Activated CD4-positive, alpha-beta memory T cell treated with anti-CD3 and anti-CD28 coated beads, Interleukin-2, amount 10 ng/mL, durations not matched to agents 7 days and 5 days (primary cell): ENCODE measurements at regions of chr12 and their contacts with region 1.

Region 1: DNA sequence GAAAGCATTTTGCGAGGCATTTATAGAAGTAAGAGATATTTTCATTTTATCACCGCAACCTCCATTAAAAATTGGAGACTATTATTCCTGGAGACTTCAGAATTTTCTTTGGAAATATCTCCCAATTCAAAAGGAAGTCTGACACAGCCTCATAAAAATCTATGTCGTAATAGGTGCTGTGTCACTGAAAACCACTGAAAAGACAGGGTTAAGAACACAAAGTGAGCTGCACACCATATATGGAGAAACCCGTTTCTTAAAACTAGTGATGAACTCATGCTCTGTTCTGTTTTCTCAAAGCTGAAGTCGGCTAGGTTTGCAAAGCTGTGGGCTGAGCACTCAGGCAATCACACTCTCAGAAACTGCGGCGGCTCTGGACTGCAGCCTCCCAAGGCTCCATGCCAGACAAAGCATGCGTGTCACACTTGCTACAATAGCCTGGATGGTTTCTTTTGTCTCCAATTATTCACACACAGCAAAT is at the start of gene GLIPR1:
- DNase-seq: peak; percentile 81
- H3K4me3 Mint-ChIP-seq: peak within 1 kb of the TSS; percentile 87
- H3K27ac Mint-ChIP-seq: peak within 1 kb of the TSS; percentile 98
- H3K4me1 Mint-ChIP-seq: peaks cover 71% of the 10 kb centered on the region
- H3K27me3 Mint-ChIP-seq: peaks cover 2% of the 10 kb centered on the region
- total RNA-seq, gene GLIPR1: 52.3 to 54.7 TPM

Region 2: DNA sequence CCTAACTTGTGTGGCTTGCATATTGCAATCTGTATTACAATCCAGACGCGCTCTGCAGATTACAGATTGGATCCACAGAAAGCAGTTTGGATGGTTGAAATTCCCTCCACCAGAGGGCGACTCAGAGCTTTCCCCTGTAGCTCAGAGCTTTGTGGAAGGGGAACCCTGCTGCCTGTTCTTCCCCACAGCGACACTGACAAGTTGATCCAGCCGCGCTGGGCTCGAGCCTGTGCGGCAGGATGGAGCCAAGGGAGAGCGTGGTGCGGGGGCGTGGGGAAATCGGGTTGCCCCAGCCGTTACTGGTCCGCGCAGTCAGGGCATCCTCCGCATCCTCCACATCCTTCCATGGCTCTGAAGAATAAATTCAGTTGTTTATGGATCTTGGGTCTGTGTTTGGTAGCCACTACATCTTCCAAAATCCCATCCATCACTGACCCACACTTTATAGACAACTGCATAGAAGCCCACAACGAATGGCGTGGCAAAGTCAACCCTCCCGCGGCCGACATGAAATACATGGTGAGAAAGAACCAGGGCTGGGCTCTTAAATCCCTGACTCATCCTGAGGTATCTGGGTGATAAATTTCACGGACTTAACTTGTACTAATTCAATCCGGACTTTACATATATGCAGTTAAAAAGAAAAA is 146.0 kb before region 1 on chr12 and contains the start of gene GLIPR1L1:
- CTCF ChIA-PET with region 1: interaction called, 17 read pairs
- POLR2A ChIA-PET with region 1: interaction called, 7 read pairs
- DNase-seq: peak; percentile 83
- H3K4me3 Mint-ChIP-seq: peak within 1 kb of the TSS; percentile 59
- H3K27ac Mint-ChIP-seq: no peak within 1 kb of the TSS
- H3K4me1 Mint-ChIP-seq: peaks cover 33% of the 10 kb centered on the region
- H3K27me3 Mint-ChIP-seq: peaks cover 31% of the 10 kb centered on the region
- total RNA-seq, gene GLIPR1L1: not detected

Region 3: DNA sequence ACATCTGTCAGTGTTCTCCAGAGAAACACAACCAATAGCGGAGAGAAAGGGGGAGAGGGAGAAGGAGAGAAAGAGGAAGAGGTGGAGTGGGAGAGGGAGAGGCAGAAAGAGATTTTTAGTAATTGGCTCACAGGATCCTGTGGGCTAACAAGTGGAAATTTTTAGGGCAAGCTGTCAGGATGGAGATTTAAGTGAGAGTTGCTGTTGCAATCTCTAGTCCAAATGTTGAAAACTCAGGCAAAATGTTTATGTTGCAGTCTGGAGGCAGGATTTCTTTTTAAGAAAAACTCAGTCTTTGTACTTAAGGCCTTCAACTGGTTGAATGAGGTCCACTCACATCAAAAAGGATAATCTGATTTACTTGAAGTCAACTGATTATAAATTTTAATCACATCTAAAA is 102.2 kb before region 1 on chr12:
- CTCF ChIA-PET with region 1: no interaction called
- POLR2A ChIA-PET with region 1: no interaction called
- DNase-seq: no peak
- H3K4me3 Mint-ChIP-seq: no peak overlapping the region
- H3K27ac Mint-ChIP-seq: no peak overlapping the region
- H3K4me1 Mint-ChIP-seq: no peaks in the 10 kb centered on the region
- H3K27me3 Mint-ChIP-seq: no peaks in the 10 kb centered on the region

Region 4: GRCh38 chr12:75427491-75427890 is 53.0 kb before region 1 on chr12:
- CTCF ChIA-PET with region 1: no interaction called
- POLR2A ChIA-PET with region 1: no interaction called
- DNase-seq: no peak
- H3K4me3 Mint-ChIP-seq: no peak overlapping the region
- H3K27ac Mint-ChIP-seq: no peak overlapping the region
- H3K4me1 Mint-ChIP-seq: no peaks in the 10 kb centered on the region
- H3K27me3 Mint-ChIP-seq: no peaks in the 10 kb centered on the region

Region 5: GRCh38 chr12:75437564-75437963 is 42.9 kb before region 1 on chr12:
- CTCF ChIA-PET with region 1: interaction called, 22 read pairs
- POLR2A ChIA-PET with region 1: interaction called, 3 read pairs
- DNase-seq: no peak
- H3K4me3 Mint-ChIP-seq: no peak overlapping the region
- H3K27ac Mint-ChIP-seq: no peak overlapping the region
- H3K4me1 Mint-ChIP-seq: peaks cover 15% of the 10 kb centered on the region
- H3K27me3 Mint-ChIP-seq: no peaks in the 10 kb centered on the region

Region 6: GRCh38 chr12:75505706-75506312 is 25.3 kb after region 1 on chr12:
- CTCF ChIA-PET with region 1: interaction called, 65 read pairs
- POLR2A ChIA-PET with region 1: interaction called, 25 read pairs
- DNase-seq: no peak
- H3K4me3 Mint-ChIP-seq: no peak overlapping the region
- H3K27ac Mint-ChIP-seq: no peak overlapping the region
- H3K4me1 Mint-ChIP-seq: peaks cover 28% of the 10 kb centered on the region
- H3K27me3 Mint-ChIP-seq: no peaks in the 10 kb centered on the region

Region 7: DNA sequence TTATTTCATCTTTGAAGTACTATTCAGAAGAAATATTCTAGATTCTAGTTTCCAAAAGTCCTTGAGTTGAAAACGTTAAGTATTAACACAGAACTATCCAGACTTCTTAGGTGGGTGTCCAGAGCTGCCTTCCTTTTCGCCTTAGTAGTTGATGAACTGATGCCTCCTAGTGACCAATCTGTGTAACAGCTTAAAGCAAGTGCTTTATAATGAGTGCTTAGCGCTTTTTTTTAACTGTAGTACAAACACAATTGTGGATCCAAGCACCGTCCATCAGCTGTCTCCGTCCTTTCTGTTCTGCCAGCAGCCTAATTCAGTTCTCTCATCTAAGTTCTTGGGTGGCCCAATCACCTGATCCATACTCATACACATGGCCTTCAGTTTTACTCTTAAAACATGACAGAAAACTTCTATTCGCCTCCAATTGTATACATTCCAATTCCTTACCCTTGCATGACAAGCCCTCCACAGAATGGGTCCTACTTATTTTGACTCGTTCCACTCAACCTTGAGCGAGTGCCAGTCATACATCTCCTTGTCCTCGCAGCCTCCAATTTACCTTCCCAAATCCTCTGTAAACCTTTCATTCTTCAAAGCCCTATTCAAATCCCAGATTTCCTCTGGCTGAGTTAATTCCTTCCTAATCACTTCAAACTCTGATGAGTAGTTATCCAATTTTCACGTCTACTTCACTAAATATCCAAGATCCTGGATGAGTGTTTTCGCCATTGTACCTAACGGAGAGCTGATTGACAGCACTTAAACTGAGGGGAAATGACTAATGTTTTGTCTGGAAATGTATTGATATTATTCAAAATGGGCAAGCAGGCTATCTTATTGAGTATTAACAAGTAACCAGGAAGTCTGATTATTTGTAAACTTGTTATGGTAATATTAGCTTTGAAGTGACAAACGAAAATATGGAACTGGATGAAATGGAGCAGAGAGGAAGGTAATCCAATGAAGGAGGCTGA is 556.9 kb after region 1 on chr12:
- CTCF ChIA-PET with region 1: interaction called, 16 read pairs
- POLR2A ChIA-PET with region 1: interaction called, 17 read pairs
- DNase-seq: peak; percentile 34
- H3K4me3 Mint-ChIP-seq: no peak overlapping the region
- H3K27ac Mint-ChIP-seq: no peak overlapping the region
- H3K4me1 Mint-ChIP-seq: peaks cover 28% of the 10 kb centered on the region
- H3K27me3 Mint-ChIP-seq: no peaks in the 10 kb centered on the region